Esophagus muscularis mucosa (tissue), 4 donors: ENCODE measurements at regions of chr14 and their contacts with region 1.

Region 1: DNA sequence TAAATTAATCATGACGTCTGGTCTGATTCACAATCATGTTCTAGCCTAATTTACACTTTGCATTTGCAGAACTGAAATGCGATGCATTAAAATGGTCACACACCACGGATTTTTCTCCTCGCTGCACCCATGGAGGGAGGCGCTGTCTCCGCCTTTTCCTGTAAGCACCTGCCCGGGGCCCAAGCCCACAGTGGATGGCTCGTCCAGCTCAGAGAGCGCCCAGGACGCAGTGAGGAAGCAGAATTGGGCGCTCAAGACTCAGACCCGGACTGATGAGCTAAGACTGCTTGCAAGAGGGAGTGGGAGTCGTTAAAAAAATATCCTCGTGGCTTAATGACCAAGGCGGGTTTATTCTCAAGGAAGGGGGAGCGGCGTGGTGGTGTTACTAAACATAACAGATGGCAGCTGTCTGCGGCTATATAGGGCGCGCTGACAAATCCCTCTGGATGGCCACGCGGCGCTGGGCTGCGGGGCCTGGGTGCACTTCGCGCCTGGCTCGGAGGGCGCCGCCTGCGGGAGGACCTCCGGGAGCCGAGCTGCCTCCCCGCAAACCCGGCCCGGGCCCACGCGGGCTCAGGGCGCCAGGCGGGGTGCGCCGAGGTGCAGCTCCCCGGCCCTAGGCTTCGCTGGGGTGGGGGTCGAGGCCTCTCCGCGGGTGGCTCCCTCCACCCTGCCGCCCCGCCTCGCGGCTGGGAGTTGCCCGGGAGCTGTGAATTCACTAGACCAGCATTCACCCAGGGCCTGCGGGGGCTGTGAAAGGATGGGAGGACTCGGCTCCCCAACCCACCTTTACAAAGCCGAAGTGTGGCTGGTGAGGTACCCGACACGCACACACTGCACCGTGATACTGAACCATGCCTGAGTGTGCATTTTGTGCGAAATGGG is 78.7 kb downstream of the PPM1A start:
- DNase-seq: no peak
- H3K4me3 ChIP-seq: peak overlapping the region; percentile 42 to 57 (median 46)
- H3K27ac ChIP-seq: peak overlapping the region in 1 of 4 donors; percentile 11
- H3K4me1 ChIP-seq: peaks cover 11 to 25% (median 22%) of the 10 kb centered on the region in 4 donors
- H3K27me3 ChIP-seq: peaks cover 0 to 26% (median 0%) of the 10 kb centered on the region in 4 donors
- CTCF ChIP-seq: no peak
- EP300 ChIP-seq: no peak
- POLR2A ChIP-seq: no peak

Region 2: GRCh38 chr14:60195179-60195810 is 132.4 kb before region 1 on chr14:
- intact Hi-C with region 1: loop called (anchors 10 kb)
- DNase-seq: no peak
- H3K4me3 ChIP-seq: no peak overlapping the region
- H3K27ac ChIP-seq: no peak overlapping the region
- H3K4me1 ChIP-seq: no peaks in the 10 kb centered on the region
- H3K27me3 ChIP-seq: no peaks in the 10 kb centered on the region
- CTCF ChIP-seq: no peak
- EP300 ChIP-seq: no peak
- POLR2A ChIP-seq: no peak

Region 3: GRCh38 chr14:60248697-60249318 is 78.9 kb before region 1 on chr14 and contains the start of gene PPM1A:
- intact Hi-C with region 1: loop called (anchors 5 kb)
- DNase-seq: peak; percentile 98
- H3K4me3 ChIP-seq: peak within 1 kb of the TSS; percentile 82 to 97 (median 92)
- H3K27ac ChIP-seq: peak within 1 kb of the TSS; percentile 98 to 100 (median 98)
- H3K4me1 ChIP-seq: peaks cover 26 to 48% (median 41%) of the 10 kb centered on the region in 4 donors
- H3K27me3 ChIP-seq: no peaks in the 10 kb centered on the region
- CTCF ChIP-seq: no peak
- EP300 ChIP-seq: no peak
- POLR2A ChIP-seq: peak; percentile 86
- total RNA-seq, gene PPM1A: 40.4 to 60.2 (median 53.6) TPM

Region 4: DNA sequence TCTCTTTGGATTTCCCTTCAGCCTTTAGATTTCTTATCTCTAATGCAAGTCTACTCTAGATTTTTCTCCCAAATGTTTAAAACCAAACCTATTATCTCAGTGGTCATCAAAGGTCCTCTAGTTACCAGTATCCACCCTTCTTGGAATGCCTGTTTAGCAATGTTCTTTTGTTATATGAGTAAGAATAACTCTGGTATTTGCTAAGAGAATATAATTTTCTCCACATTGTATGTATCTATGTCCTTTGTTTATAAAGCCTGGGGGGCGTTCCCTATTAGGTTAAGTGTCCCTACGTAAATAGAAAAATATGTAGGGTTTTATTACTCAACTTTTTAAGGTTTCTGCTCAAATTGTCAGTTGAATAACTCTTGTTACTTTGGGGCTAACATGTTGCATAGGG is 51.3 kb before region 1 on chr14:
- intact Hi-C with region 1: no loop called
- DNase-seq: no peak
- H3K4me3 ChIP-seq: no peak overlapping the region
- H3K27ac ChIP-seq: no peak overlapping the region
- H3K4me1 ChIP-seq: peaks cover 61 to 76% (median 62%) of the 10 kb centered on the region in 4 donors
- H3K27me3 ChIP-seq: no peaks in the 10 kb centered on the region
- CTCF ChIP-seq: no peak
- EP300 ChIP-seq: no peak
- POLR2A ChIP-seq: no peak

Region 5: GRCh38 chr14:60381909-60382308 is 54.2 kb after region 1 on chr14:
- intact Hi-C with region 1: no loop called
- DNase-seq: no peak
- H3K4me3 ChIP-seq: no peak overlapping the region
- H3K27ac ChIP-seq: no peak overlapping the region
- H3K4me1 ChIP-seq: no peaks in the 10 kb centered on the region
- H3K27me3 ChIP-seq: peaks cover 0 to 5% (median 0%) of the 10 kb centered on the region in 4 donors
- CTCF ChIP-seq: no peak
- EP300 ChIP-seq: no peak
- POLR2A ChIP-seq: no peak

Region 6: DNA sequence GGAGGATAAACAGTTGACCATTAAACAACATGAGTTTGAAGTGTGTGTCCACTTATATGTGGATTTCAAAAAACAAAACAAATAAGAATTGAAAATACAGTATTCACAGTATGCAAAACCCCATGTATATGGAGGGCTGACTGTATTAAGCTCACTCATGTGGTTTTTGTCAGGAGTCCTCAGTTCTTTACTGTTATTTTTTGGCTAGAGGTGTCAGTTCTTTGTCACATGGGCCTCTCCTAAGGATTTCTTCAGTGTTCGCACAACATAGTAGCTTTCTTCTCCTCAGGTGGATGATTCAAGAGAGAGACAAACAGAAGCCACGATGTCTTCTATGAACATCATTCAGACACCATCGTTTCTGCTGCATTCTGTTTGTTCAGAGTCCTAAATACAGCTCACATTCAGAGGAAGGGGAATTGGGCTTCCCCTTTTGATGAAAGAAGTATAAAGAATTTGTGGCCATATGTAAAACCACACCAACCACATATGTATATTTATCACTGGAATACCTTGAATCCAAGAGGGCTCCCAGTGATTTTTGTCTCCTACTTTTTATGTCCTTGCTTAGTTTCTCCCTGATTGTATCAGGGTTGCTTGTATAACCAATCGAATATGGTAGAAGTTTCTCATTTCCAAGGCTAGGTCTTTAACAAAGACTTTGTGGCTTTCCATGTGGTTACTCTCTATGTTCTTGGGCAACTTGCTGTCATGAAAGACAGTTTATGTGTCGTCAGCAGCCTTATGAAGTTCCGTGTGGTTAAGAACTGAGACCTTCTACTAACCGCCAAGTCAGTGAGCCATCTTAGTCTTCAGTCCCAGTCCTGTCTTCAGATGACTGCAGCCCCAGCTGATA is 425.8 kb after region 1 on chr14:
- intact Hi-C with region 1: no loop called
- DNase-seq: no peak
- H3K4me3 ChIP-seq: no peak overlapping the region
- H3K27ac ChIP-seq: no peak overlapping the region
- H3K4me1 ChIP-seq: peaks cover 0 to 18% (median 13%) of the 10 kb centered on the region in 4 donors
- H3K27me3 ChIP-seq: no peaks in the 10 kb centered on the region
- CTCF ChIP-seq: no peak
- EP300 ChIP-seq: no peak
- POLR2A ChIP-seq: no peak